Dorsolateral prefrontal cortex (tissue), 120 donors: ENCODE measurements at regions of chr2 and their contacts with region 1.

Region 1: GRCh38 chr2:239106314-239106908 is 258.5 kb downstream of the TWIST2 start:
- DNase-seq: peak; percentile 48 to 91 (median 87)
- H3K4me3 ChIP-seq: no peak overlapping the region
- H3K27ac ChIP-seq: peak overlapping the region in 50 of 59 donors; percentile 6 to 85 (median 59)
- H3K27me3 ChIP-seq: no peaks in the 10 kb centered on the region
- CTCF ChIP-seq: peak; percentile 44 to 94 (median 82)

Region 2: GRCh38 chr2:238835726-238836301 is 270.6 kb before region 1 on chr2:
- intact Hi-C with region 1: no loop called
- DNase-seq: no peak
- H3K4me3 ChIP-seq: no peak overlapping the region
- H3K27ac ChIP-seq: no peak overlapping the region
- H3K27me3 ChIP-seq: peaks cover 0 to 14% (median 0%) of the 10 kb centered on the region in 45 donors
- CTCF ChIP-seq: no peak

Region 3: GRCh38 chr2:238970553-238971081 is 135.8 kb before region 1 on chr2:
- intact Hi-C with region 1: loop called in 1 of 2 experiments (anchors 10 kb)
- DNase-seq: peak in 6 of 10 donors; percentile 37 to 76 (median 54)
- H3K4me3 ChIP-seq: no peak overlapping the region
- H3K27ac ChIP-seq: no peak overlapping the region
- H3K27me3 ChIP-seq: peaks cover 0 to 3% (median 0%) of the 10 kb centered on the region in 45 donors
- CTCF ChIP-seq: peak; percentile 66 to 100 (median 97)

Region 4: GRCh38 chr2:239035361-239036078 is 70.9 kb before region 1 on chr2:
- intact Hi-C with region 1: loop called (anchors 1 to 5 kb)
- DNase-seq: peak; percentile 47 to 82 (median 64)
- H3K4me3 ChIP-seq: peak overlapping the region in 2 of 59 donors; percentile 18
- H3K27ac ChIP-seq: peak overlapping the region in 3 of 59 donors; percentile 44 to 57 (median 46)
- H3K27me3 ChIP-seq: no peaks in the 10 kb centered on the region
- CTCF ChIP-seq: peak; percentile 61 to 99 (median 93)